MCF 10A (cell line): ENCODE measurements at regions of chr3 and their contacts with region 1.

Region 1: DNA sequence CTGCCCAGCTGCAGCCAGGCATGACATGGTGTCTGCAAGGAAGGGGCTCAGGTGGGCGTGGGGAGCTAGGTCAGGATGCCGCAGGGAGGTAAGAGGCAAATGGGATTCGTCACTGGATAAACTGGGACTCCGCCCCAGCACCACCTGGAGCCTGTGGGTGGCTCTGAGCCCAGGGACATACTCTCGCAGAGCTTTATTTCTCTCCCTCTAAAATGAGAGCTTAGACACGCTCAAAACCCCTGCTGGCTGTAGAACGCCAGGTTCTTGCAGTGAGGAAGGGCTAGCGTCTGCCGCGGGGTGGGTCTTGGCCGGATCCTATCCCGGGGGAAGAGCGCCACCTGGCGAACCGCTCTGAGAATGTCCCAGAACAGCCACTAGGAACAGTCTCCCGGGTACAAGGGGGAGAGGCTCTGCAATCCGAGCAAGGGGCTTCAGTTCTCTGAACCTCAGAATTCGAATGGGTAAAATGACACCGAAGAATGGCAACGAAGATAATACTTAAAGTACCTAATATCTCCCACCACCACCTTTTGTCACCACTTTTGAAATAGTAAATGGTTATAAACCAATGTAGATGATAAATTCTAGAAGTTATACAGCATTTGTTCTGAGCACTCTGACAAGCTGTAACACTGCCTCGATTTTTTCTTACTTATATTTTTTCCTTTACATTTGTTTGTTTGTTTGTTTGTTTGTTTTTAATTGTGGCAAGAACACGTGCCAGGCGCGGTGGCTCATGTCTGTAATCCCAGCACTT is 53.2 kb upstream of the SRGAP3 start:
- DNase-seq: peak; percentile 87
- H3K4me3 Mint-ChIP-seq: peak overlapping the region; percentile 63
- H3K27ac Mint-ChIP-seq: no peak overlapping the region
- H3K4me1 Mint-ChIP-seq: peaks cover 23% of the 10 kb centered on the region
- H3K27me3 Mint-ChIP-seq: no peaks in the 10 kb centered on the region
- CTCF ChIP-seq: peak; percentile 93

Region 2: GRCh38 chr3:8678751-8679150 is 623.9 kb before region 1 on chr3:
- CTCF ChIA-PET with region 1: interaction called, 3 read pairs
- POLR2A ChIA-PET with region 1: no interaction called
- intact Hi-C with region 1: loop called (anchors 1 kb)
- DNase-seq: no peak
- H3K4me3 Mint-ChIP-seq: no peak overlapping the region
- H3K27ac Mint-ChIP-seq: no peak overlapping the region
- H3K4me1 Mint-ChIP-seq: peaks cover 11% of the 10 kb centered on the region
- H3K27me3 Mint-ChIP-seq: no peaks in the 10 kb centered on the region
- CTCF ChIP-seq: no peak

Region 3: DNA sequence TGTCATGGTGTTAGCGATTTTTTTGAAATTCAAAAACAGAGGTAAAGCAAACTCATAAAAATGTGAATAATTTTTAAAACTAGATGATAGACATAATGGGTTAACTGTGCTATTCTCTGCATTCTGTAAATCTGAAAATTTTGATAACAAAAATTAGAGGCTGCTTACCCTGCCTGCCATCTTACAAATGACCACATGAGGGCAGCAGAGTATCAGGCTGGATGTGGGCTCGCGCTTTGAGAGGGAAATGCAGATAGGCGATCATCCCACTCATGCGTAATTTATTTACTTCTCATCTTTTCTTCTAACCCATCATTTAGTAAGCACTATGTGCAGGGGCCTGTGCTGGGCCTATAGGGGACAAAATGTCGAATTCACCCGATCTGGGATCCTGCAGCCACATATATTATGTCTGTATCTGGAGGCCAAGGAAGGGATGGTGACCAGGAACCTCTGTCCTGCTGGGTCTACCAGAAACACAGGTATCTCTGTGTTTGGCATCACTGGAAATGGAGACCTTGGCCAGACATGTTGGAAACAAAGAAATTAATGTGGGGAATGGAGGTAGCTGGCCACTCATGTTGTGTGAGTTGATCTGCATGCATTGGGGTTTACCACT is 331.5 kb before region 1 on chr3:
- CTCF ChIA-PET with region 1: interaction called, 200 read pairs
- POLR2A ChIA-PET with region 1: interaction called, 3 read pairs
- intact Hi-C with region 1: loop called (anchors 1 kb)
- DNase-seq: peak; percentile 75
- H3K4me3 Mint-ChIP-seq: no peak overlapping the region
- H3K27ac Mint-ChIP-seq: no peak overlapping the region
- H3K4me1 Mint-ChIP-seq: no peaks in the 10 kb centered on the region
- H3K27me3 Mint-ChIP-seq: peaks cover 10% of the 10 kb centered on the region
- CTCF ChIP-seq: peak; percentile 95

Region 4: DNA sequence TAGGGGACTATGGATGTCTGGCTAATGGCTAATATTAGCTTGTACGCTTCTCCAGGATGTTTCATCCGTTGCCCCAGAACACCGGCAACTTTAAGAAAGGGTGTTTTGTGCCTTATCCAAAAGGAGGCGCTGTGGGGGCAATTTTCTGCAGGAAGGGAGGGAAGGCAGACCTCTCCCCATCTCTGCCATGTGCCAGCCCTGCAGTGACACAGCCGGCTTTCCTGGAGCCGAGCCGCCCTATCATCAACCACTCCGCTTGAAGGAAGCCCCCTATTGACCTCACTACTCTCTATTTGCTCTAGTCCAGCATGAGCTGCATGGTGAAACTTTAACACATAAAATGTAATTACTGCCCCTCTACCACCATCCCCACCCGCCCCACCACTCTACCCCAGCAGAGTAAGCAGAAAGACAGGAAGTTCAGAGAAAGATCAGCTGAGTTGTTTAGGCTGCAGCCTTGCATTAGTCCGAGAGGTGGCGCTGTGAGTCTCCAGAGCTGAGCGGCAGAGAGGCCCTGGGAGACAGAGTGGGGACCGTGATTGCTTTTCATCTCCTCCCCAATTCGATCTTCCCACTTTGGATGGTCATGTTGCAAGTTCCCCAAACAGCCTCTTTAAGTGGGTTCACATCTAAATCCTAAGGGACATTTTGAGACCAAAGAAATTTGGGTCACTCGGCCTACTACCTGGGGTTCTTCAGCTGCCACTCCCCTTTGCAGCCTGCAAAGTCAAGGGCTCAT is 314.8 kb before region 1 on chr3:
- CTCF ChIA-PET with region 1: interaction called, 167 read pairs
- POLR2A ChIA-PET with region 1: interaction called, 6 read pairs
- intact Hi-C with region 1: loop called (anchors 1 kb)
- DNase-seq: peak; percentile 61
- H3K4me3 Mint-ChIP-seq: no peak overlapping the region
- H3K27ac Mint-ChIP-seq: no peak overlapping the region
- H3K4me1 Mint-ChIP-seq: no peaks in the 10 kb centered on the region
- H3K27me3 Mint-ChIP-seq: no peaks in the 10 kb centered on the region
- CTCF ChIP-seq: peak; percentile 75

Region 5: DNA sequence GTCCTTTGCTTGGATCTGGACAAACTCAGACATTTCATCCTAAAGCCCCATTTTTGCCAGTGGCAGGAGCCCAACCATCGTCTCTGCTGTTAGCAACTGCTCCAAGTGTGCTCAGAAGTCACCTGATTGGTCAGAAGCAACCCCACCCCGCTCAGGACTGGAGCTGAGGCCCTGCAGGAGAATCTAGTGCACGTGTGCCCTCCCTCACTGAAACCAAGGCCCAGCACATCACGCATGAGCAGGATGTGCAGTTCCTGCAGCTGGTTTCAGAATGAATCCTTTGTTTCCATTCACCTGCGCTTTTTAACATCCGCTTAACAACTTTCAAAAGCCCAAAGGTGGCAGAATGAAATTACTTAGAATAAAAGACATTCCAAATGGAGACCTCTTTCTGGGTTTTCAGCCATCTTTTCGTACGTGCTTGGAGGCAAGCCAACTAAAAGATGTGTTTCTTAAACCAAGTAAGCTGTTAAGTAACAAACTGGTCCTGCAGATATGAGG is 134.3 kb before region 1 on chr3:
- CTCF ChIA-PET with region 1: interaction called, 6 read pairs
- POLR2A ChIA-PET with region 1: no interaction called
- intact Hi-C with region 1: loop called (anchors 1 kb)
- DNase-seq: no peak
- H3K4me3 Mint-ChIP-seq: no peak overlapping the region
- H3K27ac Mint-ChIP-seq: peak overlapping the region; percentile 84
- H3K4me1 Mint-ChIP-seq: peaks cover 12% of the 10 kb centered on the region
- H3K27me3 Mint-ChIP-seq: no peaks in the 10 kb centered on the region
- CTCF ChIP-seq: no peak

Region 6: DNA sequence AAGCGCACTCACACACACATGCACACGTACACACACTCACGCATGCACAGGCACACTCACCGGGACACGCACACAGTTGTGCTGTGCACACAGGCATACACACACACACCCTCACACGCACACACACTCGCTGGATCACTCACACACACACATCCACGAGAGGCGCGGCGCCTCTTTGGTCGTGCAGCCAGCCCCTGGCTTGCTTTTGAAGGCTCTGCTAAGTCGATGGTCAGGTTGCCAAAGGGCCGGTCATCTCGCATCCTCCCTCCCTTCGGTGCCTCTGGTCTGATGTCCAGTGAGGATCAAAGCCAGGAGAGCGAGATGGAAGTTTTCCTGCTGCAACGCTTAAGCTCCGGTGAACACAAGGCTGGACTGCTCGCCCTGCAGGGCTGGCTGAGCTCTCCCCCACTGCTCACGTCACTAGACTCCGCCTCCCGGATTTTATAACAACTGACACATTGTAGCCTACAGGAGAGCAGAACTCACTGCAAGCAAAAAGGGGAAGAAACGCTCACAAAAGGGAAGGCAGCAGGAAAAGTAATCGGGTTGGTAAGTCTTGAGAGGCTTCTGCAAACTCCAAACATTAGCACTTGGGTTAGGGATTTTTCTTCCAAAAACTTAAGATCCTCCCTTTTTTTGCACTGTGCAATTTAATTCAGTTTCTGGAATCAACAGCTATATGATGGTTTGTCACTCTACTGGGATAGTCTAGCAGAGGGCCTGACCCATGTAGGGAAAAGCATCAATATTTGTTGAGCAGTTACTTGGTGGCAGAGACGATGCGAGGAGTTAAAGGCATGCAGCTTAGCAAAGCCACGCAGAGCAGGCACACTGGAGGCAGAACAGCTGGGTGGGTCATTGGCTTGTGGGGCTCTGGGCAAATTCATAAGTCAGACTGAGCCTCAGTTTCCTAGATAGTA is 53.1 kb before region 1 on chr3 and contains the start of gene SRGAP3:
- CTCF ChIA-PET with region 1: interaction called, 56 read pairs
- POLR2A ChIA-PET with region 1: interaction called, 3 read pairs
- intact Hi-C with region 1: loop called (anchors 2 kb)
- DNase-seq: peak; percentile 95
- H3K4me3 Mint-ChIP-seq: peak within 1 kb of the TSS; percentile 88
- H3K27ac Mint-ChIP-seq: peak within 1 kb of the TSS; percentile 47
- H3K4me1 Mint-ChIP-seq: peaks cover 42% of the 10 kb centered on the region
- H3K27me3 Mint-ChIP-seq: peaks cover 3% of the 10 kb centered on the region
- CTCF ChIP-seq: no peak
- total RNA-seq, gene SRGAP3: 13.7 and 19.8 TPM in 2 replicates

Region 7: GRCh38 chr3:9316881-9317361 is 14.3 kb after region 1 on chr3:
- CTCF ChIA-PET with region 1: interaction called, 28 read pairs
- POLR2A ChIA-PET with region 1: interaction called, 4 read pairs
- intact Hi-C with region 1: no loop called
- DNase-seq: no peak
- H3K4me3 Mint-ChIP-seq: no peak overlapping the region
- H3K27ac Mint-ChIP-seq: no peak overlapping the region
- H3K4me1 Mint-ChIP-seq: no peaks in the 10 kb centered on the region
- H3K27me3 Mint-ChIP-seq: peaks cover 11% of the 10 kb centered on the region
- CTCF ChIP-seq: no peak

Region 8: GRCh38 chr3:9373465-9373864 is 70.9 kb after region 1 on chr3:
- CTCF ChIA-PET with region 1: no interaction called
- POLR2A ChIA-PET with region 1: no interaction called
- intact Hi-C with region 1: no loop called
- DNase-seq: no peak
- H3K4me3 Mint-ChIP-seq: no peak overlapping the region
- H3K27ac Mint-ChIP-seq: no peak overlapping the region
- H3K4me1 Mint-ChIP-seq: no peaks in the 10 kb centered on the region
- H3K27me3 Mint-ChIP-seq: no peaks in the 10 kb centered on the region
- CTCF ChIP-seq: no peak

Region 9: DNA sequence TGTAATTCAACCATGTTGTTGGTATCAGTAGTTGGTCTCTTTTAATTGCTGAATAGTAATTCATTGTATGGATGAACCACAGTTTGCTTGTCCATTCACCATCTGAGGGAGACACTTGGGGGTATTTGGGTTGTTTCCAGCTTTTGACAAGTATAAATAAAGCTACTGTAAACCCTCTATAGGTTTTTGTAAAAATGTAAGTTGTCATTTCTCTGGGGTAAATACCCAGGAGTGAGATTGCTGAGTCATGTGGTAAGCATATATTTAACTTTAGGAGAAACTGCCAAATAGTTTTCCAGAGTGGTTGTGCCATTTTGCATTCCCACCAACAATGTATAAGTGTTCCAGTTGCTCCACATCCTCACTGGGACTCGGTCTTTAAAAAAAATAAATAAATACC is 266.5 kb after region 1 on chr3:
- CTCF ChIA-PET with region 1: no interaction called
- POLR2A ChIA-PET with region 1: no interaction called
- intact Hi-C with region 1: no loop called
- DNase-seq: no peak
- H3K4me3 Mint-ChIP-seq: no peak overlapping the region
- H3K27ac Mint-ChIP-seq: no peak overlapping the region
- H3K4me1 Mint-ChIP-seq: no peaks in the 10 kb centered on the region
- H3K27me3 Mint-ChIP-seq: peaks cover 35% of the 10 kb centered on the region
- CTCF ChIP-seq: no peak

Region 10: GRCh38 chr3:11001020-11001656 is 1698.5 kb after region 1 on chr3:
- CTCF ChIA-PET with region 1: no interaction called
- POLR2A ChIA-PET with region 1: no interaction called
- intact Hi-C with region 1: no loop called
- DNase-seq: peak; percentile 8
- H3K4me3 Mint-ChIP-seq: no peak overlapping the region
- H3K27ac Mint-ChIP-seq: no peak overlapping the region
- H3K4me1 Mint-ChIP-seq: peaks cover 9% of the 10 kb centered on the region
- H3K27me3 Mint-ChIP-seq: peaks cover 14% of the 10 kb centered on the region
- CTCF ChIP-seq: no peak